ENCODE measurements at regions of chr7 and their contacts with region 1.

Region 1: DNA sequence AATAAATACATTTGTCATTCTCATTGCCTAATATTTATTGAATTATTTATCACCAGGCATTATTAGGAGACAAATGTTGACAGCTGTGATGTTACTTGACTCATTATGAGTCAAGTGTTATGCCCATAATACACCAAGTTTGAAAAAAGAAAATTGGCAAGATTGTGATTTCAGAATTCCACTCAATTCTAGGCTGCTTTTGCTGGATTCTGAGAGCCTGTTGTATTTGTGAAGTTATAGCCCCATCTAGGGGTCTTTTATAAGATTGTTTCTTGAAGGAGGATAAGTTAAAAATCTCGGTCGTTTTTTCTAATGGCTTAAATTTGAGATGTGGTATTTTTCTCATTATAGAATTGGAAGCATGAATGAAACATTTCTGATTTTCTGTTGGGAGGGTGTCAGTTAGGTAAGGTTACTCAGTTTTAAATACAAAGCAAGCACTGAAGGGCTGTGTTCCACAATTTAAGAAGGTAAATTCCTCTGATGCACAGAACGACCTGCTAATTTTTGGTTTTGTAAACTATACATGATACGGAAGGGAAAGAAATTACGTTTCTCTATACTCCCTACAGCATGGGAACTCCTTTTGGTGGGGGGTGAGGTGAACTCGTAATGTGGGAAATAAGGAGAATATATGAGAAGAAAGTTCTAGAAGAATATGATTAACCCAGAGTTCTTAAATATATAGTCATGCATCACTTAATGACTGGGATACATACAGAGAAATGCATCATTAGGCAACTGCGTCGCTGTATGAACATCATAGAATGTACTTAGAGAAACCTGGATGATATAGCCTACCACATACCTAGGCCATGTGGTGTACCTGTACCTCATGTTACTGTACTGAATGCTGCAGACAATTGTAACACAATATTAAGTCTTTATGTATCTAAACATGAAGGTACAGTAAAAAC is 2.6 kb downstream of the STK31 start:
- DNase-seq: no peak
- ATAC-seq: peak; percentile 49 to 85 (median 77)
- H3K4me3 ChIP-seq: no peak overlapping the region
- H3K27ac ChIP-seq: no peak overlapping the region
- H3K4me1 ChIP-seq: peaks cover 0 to 6% (median 2%) of the 10 kb centered on the region in 3 donors
- H3K27me3 ChIP-seq: no peaks in the 10 kb centered on the region
- CTCF ChIP-seq: peak in 3 of 4 donors; percentile 34 to 53 (median 49)

Region 2: DNA sequence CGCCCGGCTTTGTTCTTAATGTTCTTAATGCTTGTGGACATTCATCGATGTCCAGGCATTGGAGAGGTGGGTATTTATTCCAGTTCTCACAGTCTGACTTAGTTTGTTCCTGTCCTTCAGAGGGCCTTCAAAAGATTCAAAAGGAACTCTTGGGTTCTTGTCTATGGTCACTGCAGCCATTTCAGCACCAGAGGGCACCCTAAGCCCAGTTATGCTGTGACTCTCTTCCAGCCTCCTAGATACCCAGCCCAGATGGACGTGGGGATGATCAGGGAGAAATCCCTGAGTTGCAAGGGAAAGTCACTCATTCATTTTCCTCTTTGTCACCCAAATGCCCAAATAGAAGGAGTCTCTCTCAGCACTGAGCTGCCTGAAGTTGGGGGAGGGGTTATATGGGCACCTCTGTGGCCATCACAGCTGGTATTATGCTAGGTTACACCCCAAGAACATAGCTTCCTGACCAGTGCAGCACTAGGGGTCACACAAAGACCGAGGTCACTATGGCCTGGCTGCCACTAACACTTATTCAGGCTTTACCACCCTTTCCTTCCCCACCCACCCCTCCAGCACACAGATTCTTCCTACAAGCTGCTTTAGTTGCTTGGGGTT is 141.9 kb before region 1 on chr7:
- intact Hi-C with region 1: loop called in 2 of 3 experiments (anchors 5 to 10 kb)
- DNase-seq: peak; percentile 60 to 81 (median 66)
- ATAC-seq: peak; percentile 98 to 100 (median 100)
- H3K4me3 ChIP-seq: no peak overlapping the region
- H3K27ac ChIP-seq: no peak overlapping the region
- H3K4me1 ChIP-seq: no peaks in the 10 kb centered on the region
- H3K27me3 ChIP-seq: no peaks in the 10 kb centered on the region
- CTCF ChIP-seq: peak; percentile 47 to 70 (median 64)

Region 3: DNA sequence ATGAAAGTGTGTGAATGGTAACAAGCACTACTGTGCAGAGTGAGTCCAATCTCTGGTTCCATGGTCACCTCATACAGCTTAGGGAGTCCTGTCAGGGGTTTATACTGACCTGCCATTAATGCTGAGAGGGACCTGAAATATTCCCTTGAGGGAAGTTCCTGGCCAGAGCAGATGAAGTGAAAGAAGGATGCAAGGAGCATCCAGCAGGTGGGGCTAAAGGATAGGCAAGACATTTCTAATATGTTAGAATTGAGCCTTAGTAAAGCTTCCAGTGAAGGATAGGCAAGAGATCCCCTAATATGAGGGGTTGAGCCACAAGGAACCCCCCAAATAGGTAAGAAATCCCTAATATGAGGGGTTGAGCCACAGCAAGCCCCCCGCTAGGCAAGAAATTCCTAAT is 58.1 kb before region 1 on chr7:
- intact Hi-C with region 1: loop called in 1 of 3 experiments (anchors 10 kb)
- DNase-seq: peak in 4 of 6 donors; percentile 35 to 72 (median 48)
- ATAC-seq: peak; percentile 84 to 97 (median 91)
- H3K4me3 ChIP-seq: no peak overlapping the region
- H3K27ac ChIP-seq: no peak overlapping the region
- H3K4me1 ChIP-seq: peaks cover 0 to 7% (median 0%) of the 10 kb centered on the region in 3 donors
- H3K27me3 ChIP-seq: no peaks in the 10 kb centered on the region
- CTCF ChIP-seq: peak; percentile 25 to 36 (median 32)

Region 4: DNA sequence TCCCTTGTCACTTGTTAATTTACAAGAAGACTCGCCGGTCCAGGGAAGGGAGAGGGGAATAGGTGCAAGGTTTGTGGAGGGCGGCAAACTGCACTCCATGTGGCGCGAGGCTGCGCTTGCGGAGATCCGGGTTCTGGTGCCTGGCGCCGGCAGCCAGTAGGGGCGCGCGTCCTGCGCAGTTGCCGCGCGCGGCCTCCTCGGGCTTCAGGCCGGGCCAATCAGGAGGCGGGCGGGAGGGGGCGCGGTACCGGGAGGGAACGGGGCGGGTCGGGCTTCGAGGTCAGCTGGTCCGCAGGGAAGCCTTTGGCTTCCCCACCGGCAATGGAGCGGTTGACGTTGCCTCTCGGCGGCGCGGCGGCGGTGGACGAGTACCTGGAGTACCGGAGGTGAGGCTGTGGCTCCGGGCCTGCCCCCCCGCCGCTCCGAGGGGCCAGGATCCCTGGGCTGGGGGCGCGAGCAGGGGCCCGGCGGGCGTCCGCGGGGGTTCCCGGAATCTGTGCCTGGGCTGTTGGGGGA is 32.7 kb before region 1 on chr7 and contains the start of gene FAM221A:
- intact Hi-C with region 1: no loop called
- DNase-seq: peak; percentile 92 to 97 (median 94)
- ATAC-seq: peak; percentile 96 to 98 (median 96)
- H3K4me3 ChIP-seq: peak within 1 kb of the TSS; percentile 72 to 88 (median 77)
- H3K27ac ChIP-seq: peak within 1 kb of the TSS; percentile 93 to 98 (median 96)
- H3K4me1 ChIP-seq: peaks cover 2 to 21% (median 14%) of the 10 kb centered on the region in 3 donors
- H3K27me3 ChIP-seq: no peaks in the 10 kb centered on the region
- CTCF ChIP-seq: peak; percentile 60 to 81 (median 73)
- total RNA-seq, gene FAM221A: 9.7 to 14.8 (median 12.2) TPM